ENCODE measurements at regions of chr11 and their contacts with region 1.

Region 1: GRCh38 chr11:72430741-72431570 is 3.4 kb downstream of the CLPB start:
- DNase-seq: peak; percentile 64
- ATAC-seq: peak; percentile 42
- H3K4me3 Mint-ChIP-seq: peak overlapping the region; percentile 14
- H3K27ac Mint-ChIP-seq: peak overlapping the region; percentile 68
- H3K4me1 Mint-ChIP-seq: peaks cover 29% of the 10 kb centered on the region
- H3K27me3 Mint-ChIP-seq: no peaks in the 10 kb centered on the region

Region 2: GRCh38 chr11:71787098-71787823 is 643.7 kb before region 1 on chr11:
- CTCF ChIA-PET with region 1: no interaction called
- POLR2A ChIA-PET with region 1: no interaction called
- intact Hi-C with region 1: loop called in 1 of 2 experiments (anchors 5 kb)
- DNase-seq: peak; percentile 97
- ATAC-seq: peak; percentile 97
- H3K4me3 Mint-ChIP-seq: peak overlapping the region; percentile 84
- H3K27ac Mint-ChIP-seq: peak overlapping the region; percentile 95
- H3K4me1 Mint-ChIP-seq: peaks cover 24% of the 10 kb centered on the region
- H3K27me3 Mint-ChIP-seq: no peaks in the 10 kb centered on the region

Region 3: DNA sequence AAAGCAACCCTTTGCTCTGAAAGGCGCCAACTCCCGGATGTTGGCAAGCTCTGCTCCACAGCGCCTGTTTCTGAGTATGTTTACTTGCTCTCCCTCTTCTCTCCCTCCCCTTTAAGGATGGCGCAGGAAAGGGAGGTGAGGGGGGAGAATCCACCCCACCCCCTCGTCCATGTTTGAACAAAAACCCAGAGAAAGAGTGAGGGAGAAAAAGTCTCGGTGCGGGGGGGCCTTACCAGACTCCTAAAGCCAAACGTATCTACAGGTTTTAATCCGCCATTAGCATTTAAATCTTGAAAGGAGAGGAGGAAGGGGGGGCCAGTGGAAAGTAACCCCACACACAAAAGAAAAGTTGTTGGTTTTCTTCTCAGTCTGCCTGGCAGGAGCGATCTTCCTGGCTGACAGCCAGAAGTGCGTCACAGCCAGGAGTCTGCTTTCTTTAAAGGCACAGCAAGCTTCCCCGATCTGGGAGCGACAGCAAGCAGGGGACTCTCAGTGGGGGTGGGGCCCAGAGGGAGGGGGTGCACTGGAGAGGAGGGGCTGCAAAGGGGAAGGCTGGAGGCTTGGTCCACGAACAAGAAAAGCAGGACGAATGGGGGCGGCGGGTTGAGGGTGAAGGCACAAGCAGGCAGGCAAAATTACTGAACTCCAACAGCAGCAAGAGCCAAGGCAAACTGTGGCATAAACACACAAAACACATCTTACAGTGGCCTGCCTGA is 390.1 kb before region 1 on chr11:
- CTCF ChIA-PET with region 1: interaction called, 6 read pairs
- POLR2A ChIA-PET with region 1: interaction called, 3 read pairs
- intact Hi-C with region 1: loop called in 1 of 2 experiments (anchors 5 kb)
- DNase-seq: peak; percentile 86
- ATAC-seq: peak; percentile 76
- H3K4me3 Mint-ChIP-seq: no peak overlapping the region
- H3K27ac Mint-ChIP-seq: no peak overlapping the region
- H3K4me1 Mint-ChIP-seq: peaks cover 35% of the 10 kb centered on the region
- H3K27me3 Mint-ChIP-seq: no peaks in the 10 kb centered on the region

Region 4: GRCh38 chr11:72222907-72223614 is 207.9 kb before region 1 on chr11:
- CTCF ChIA-PET with region 1: interaction called, 7 read pairs
- POLR2A ChIA-PET with region 1: no interaction called
- intact Hi-C with region 1: loop called (anchors 1 to 5 kb)
- DNase-seq: peak; percentile 96
- ATAC-seq: peak; percentile 80
- H3K4me3 Mint-ChIP-seq: peak overlapping the region; percentile 96
- H3K27ac Mint-ChIP-seq: peak overlapping the region; percentile 80
- H3K4me1 Mint-ChIP-seq: peaks cover 16% of the 10 kb centered on the region
- H3K27me3 Mint-ChIP-seq: peaks cover 3% of the 10 kb centered on the region

Region 5: GRCh38 chr11:72333661-72334060 is 97.3 kb before region 1 on chr11:
- CTCF ChIA-PET with region 1: interaction called, 6 read pairs
- POLR2A ChIA-PET with region 1: no interaction called
- intact Hi-C with region 1: loop called in 1 of 2 experiments (anchors 5 kb)
- DNase-seq: peak; percentile 69
- ATAC-seq: peak; percentile 89
- H3K4me3 Mint-ChIP-seq: no peak overlapping the region
- H3K27ac Mint-ChIP-seq: peak overlapping the region; percentile 5
- H3K4me1 Mint-ChIP-seq: peaks cover 24% of the 10 kb centered on the region
- H3K27me3 Mint-ChIP-seq: no peaks in the 10 kb centered on the region

Region 6: DNA sequence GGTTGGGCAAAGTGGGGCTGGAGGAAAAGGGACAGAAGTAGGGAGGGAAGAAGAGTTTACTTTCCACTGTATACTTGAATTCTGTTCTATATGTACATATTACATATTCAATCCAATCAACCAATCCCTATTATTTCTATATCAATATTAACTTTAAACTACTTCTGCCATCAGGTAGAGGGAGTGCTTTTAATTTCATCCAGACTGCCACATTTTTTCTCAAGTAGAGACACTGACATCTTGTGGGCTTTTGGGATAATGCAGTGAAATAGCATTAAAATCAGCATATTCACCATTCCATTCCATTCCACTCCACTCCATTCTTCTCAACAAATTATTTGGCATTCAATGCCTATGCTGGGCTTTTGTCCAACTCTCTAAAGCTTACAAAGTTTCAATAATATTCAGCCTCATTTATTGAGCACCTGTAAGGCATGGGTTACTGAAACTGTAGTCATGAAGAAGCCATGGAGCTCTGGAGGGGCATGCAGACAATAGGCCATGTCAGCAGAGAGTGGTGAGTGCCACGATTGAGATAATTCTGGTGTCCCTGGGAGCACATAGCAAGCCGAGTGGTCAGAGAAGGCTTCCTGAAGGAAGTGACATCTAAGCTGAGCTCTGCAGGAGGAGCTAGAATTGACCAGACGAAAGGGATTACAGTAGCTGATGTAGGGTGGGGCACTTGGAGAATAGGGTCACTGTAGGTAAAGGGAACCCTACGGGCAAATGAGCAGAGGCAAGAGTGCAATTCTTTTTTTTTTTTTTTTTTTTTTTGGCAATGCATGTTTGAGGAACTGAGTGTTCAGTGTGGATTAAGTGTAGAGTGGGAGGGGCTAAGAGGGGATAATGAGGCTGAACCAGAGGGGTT is 16.2 kb after region 1 on chr11:
- CTCF ChIA-PET with region 1: interaction called, 20 read pairs
- POLR2A ChIA-PET with region 1: no interaction called
- intact Hi-C with region 1: no loop called
- DNase-seq: no peak
- ATAC-seq: peak; percentile 61
- H3K4me3 Mint-ChIP-seq: no peak overlapping the region
- H3K27ac Mint-ChIP-seq: no peak overlapping the region
- H3K4me1 Mint-ChIP-seq: no peaks in the 10 kb centered on the region
- H3K27me3 Mint-ChIP-seq: peaks cover 14% of the 10 kb centered on the region